ENCODE measurements at regions of chr3 and their contacts with region 1.

Region 1: GRCh38 chr3:180601688-180602666 is at the start of gene TTC14:
- DNase-seq: peak; percentile 94
- H3K4me3 ChIP-seq: peak within 1 kb of the TSS; percentile 59 to 92 (median 88)
- H3K27ac ChIP-seq: peak within 1 kb of the TSS; percentile 34
- H3K4me1 ChIP-seq: peaks cover 8% of the 10 kb centered on the region
- H3K27me3 ChIP-seq: peaks cover 2 to 4% of the 10 kb centered on the region in 2 experiments
- CTCF ChIP-seq: peak in 1 of 2 donors; percentile 13
- POLR2A ChIP-seq: peak; percentile 90
- total RNA-seq, gene TTC14: 33.6 and 34.8 TPM in 2 replicates

Region 2: DNA sequence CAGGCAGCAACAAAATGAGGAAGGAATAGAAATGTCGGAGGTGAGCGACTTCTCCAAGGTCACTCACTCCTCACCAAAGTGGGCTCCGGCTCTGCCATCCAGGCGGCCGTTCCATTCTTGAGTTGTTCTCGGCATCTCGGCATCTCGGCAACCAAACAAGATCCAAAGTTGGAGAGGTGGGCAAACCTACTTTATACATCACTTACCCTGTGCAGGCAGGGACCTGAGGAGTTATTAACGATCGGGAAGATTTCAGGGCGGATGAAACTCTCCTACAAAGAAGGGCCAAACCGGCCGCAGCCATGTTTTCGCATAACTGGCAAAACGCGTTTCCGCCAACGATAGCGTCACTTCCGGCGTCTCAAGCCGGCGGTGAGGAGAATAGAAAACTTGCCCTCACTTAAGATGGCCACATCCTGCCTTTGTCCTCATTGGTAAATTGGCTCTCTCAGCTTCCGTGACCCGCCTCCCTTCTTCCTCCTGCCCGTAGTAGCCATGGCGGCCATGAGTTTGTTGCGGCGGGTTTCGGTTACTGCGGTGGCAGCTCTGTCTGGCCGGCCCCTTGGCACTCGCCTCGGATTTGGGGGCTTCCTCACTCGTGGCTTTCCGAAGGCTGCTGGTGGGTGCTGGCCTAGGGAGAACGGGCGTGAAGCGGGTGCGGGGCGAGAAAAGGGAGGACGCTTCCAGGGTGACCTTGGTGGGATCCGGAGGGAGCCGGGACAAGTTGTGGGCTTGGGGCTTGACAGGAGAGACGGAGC is 997.5 kb before region 1 on chr3 and contains the starts of genes MRPL47 and NDUFB5:
- CTCF ChIA-PET with region 1: no interaction called
- POLR2A ChIA-PET with region 1: no interaction called
- dilution Hi-C with region 1: no loop called
- intact Hi-C with region 1: loop called (anchors 10 kb)
- DNase-seq: peak; percentile 97
- H3K4me3 ChIP-seq: peak within 1 kb of the TSS; percentile 59 to 94 (median 77)
- H3K27ac ChIP-seq: peak within 1 kb of the TSS; percentile 84
- H3K4me1 ChIP-seq: peaks cover 14% of the 10 kb centered on the region
- H3K27me3 ChIP-seq: no peaks in the 10 kb centered on the region
- CTCF ChIP-seq: no peak
- POLR2A ChIP-seq: peak; percentile 94
- total RNA-seq, gene MRPL47: 47.0 and 51.2 TPM in 2 replicates
- total RNA-seq, gene NDUFB5: 68.3 and 74.9 TPM in 2 replicates

Region 3: GRCh38 chr3:179671747-179672223 is 930.2 kb before region 1 on chr3:
- CTCF ChIA-PET with region 1: no interaction called
- POLR2A ChIA-PET with region 1: no interaction called
- dilution Hi-C with region 1: no loop called
- intact Hi-C with region 1: loop called (anchors 5 kb)
- DNase-seq: peak; percentile 100
- H3K4me3 ChIP-seq: peak overlapping the region in 1 of 3 experiments; percentile 37
- H3K27ac ChIP-seq: peak overlapping the region; percentile 94
- H3K4me1 ChIP-seq: peaks cover 15% of the 10 kb centered on the region
- H3K27me3 ChIP-seq: no peaks in the 10 kb centered on the region
- CTCF ChIP-seq: no peak
- POLR2A ChIP-seq: no peak

Region 4: DNA sequence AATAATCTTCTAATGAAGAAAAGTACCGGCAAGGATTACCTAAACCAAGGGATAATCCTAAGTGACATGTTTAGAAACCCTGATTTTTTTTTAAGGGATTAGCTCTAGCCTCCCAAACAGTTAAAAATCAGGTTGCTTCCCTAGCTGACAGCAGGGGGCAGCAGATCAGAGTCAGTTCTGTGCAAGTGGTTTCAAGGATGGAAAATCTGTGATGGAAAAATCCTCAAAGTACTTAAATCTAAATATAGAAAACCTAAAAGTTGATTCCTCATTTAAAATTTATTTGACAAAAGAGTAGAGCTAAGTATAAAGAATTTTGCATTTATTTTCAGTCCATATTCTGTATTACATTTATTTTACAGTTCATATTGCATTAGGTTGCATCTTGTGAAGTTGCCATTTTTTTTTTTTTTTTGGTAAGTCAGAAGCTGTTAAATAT is 672.9 kb before region 1 on chr3:
- CTCF ChIA-PET with region 1: interaction called, 21 read pairs
- POLR2A ChIA-PET with region 1: no interaction called
- dilution Hi-C with region 1: no loop called
- intact Hi-C with region 1: loop called (anchors 2 kb)
- DNase-seq: peak; percentile 52
- H3K4me3 ChIP-seq: no peak overlapping the region
- H3K27ac ChIP-seq: no peak overlapping the region
- H3K4me1 ChIP-seq: no peaks in the 10 kb centered on the region
- H3K27me3 ChIP-seq: no peaks in the 10 kb centered on the region
- CTCF ChIP-seq: peak; percentile 59 to 66
- POLR2A ChIP-seq: no peak

Region 5: DNA sequence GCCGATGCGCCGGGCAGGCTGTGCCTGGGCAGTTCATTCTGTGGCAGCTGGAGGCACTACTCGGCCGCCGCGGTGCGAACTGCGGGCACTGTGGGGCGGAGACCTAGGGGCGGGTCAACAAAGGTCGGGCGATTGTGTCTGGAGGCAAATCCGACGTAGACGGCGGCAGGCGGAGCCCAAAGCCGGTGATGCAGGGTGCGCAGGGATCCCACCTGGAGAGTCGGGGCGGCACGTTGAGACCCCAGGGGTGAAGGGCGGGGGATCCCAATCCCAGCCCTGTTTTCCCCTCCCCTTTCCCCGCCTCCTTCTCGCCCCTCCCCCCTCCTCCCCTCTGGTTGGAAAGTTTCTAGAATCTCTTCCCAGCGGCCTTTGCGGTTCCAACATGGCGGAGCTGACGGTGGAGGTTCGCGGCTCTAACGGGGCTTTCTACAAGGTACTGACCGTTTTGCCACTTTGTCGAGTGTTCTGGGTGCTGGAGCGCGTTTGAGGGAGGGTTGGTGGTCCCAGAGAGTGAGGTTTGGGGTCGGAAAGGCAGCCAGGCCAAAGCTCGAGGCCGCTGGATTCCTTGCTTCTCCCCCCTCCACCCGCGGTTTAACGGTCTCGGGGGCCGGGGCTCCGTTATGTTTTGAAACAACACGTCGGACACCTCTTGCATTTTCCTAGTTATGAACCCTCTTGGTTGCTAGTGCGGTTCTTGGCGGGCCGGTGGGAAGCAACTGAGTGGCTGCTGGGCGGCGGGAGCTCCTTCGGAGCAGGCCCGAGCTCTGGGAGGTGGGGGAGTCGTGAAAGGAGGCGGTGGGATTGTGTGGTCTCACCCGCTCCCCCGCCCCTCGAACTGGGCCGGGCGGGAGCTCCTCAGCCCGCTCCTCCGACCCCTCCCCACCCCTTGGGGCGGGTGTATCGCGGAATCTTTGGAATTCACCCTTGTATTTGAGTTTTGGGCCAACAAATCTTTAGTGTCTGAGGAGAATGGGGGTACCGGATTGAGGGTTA is 310.6 kb after region 1 on chr3 and contains the start of gene FXR1:
- CTCF ChIA-PET with region 1: interaction called, 3 read pairs
- POLR2A ChIA-PET with region 1: interaction called, 5 read pairs
- dilution Hi-C with region 1: no loop called
- intact Hi-C with region 1: loop called (anchors 5 kb)
- DNase-seq: peak; percentile 83
- H3K4me3 ChIP-seq: peak within 1 kb of the TSS; percentile 81 to 98 (median 90)
- H3K27ac ChIP-seq: peak within 1 kb of the TSS; percentile 92
- H3K4me1 ChIP-seq: peaks cover 16% of the 10 kb centered on the region
- H3K27me3 ChIP-seq: no peaks in the 10 kb centered on the region
- CTCF ChIP-seq: peak; percentile 67 to 83
- POLR2A ChIP-seq: peak; percentile 87
- total RNA-seq, gene FXR1: 183 and 186 TPM in 2 replicates